ENCODE measurements at regions of chr1 and their contacts with region 1.

Region 1: GRCh38 chr1:115112496-115113375 is 23.4 kb upstream of the TSPAN2 start:
- DNase-seq: no peak
- H3K4me3 ChIP-seq: no peak overlapping the region
- CTCF ChIP-seq: peak; percentile 94

Region 2: DNA sequence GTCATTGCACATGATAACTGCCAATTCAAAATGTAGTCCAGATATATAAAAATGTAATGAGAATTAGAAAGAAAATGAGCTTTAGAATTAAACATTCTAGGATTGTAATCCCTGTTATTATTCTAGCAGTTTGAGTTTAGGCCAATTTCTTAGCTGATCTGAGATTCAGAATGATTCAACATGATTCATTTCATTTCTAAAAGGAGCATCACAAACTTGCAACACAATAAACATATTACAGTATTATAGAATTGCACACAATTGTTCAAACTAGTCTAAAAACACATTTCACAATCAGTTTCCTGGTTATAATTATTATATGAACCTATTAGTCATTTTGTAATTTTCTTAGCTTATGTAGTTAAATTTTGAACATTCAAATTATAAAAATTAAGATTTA is 126.5 kb before region 1 on chr1:
- in situ Hi-C with region 1: loop called (anchors 5 kb)
- DNase-seq: no peak
- H3K4me3 ChIP-seq: no peak overlapping the region
- CTCF ChIP-seq: no peak

Measured in astrocyte of the cerebellum (primary cell).